A673 (cell line): ENCODE measurements at regions of chr11 and their contacts with region 1.

Region 1: DNA sequence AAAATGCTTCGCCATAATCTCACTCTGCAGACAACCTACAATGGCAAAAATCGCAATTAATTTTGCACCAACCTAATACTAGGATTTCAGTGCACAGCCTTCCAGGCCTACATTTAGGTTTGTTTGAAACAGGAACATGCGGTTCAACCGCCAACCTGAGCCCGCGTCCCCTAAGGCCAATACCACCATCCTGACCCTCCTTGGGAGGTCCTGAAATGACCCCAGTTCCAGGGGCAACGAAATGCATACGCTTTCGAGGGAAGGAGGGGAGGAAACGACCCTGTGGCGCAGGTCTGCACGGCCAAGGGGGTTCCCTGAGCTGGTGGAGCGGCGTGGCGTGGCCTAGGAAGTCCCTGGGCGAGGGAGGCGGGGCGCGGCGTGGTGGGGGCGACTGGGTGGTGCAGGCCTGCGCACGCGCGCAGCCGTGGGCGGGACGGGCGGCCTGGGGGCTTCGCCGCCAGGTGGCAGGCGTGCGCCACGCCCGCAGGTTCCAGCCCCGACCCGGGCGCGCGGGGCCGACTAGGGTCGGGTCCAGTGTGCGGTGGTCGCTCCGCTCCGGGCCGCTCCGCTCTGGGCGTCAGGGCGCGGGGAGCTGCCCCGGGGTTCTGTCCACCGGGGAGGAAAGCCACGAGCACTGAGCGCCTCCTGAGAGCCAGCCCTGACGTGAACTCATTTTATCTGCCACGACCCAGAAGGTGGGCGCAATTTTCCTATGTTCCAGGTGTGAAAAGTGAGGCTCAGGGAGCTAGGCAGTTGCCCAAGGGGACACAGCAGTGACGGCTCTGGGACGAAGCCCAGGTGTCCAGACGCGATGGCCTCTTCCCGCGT is 94.1 kb downstream of the SWAP70 start:
- DNase-seq: peak; percentile 85
- H3K4me3 ChIP-seq: peak overlapping the region; percentile 64
- H3K27ac ChIP-seq: peak overlapping the region; percentile 93
- H3K4me1 ChIP-seq: peaks cover 24% of the 10 kb centered on the region
- H3K27me3 ChIP-seq: no peaks in the 10 kb centered on the region
- CTCF ChIP-seq: peak; percentile 50; the same call in 1 of the 2 replicates

Region 2: DNA sequence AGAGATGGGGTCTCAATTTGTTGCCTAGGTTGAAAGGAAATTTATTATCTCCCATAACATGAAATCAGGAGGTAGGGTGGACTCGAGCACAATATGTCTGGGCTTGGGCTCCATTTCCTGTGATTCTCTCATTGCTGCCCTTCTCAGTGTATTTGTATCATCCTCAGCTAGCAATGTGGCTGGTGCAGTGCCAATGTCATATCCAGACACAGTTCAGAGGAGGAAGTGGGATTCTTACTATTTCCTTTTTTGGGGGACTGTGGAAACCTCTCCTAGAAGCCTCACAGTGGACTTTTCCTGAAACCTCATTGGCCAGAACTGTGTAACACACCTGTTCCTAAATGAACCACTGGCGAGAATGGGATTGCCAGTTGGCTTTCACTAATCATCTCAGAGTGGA is 115.1 kb before region 1 on chr11:
- CTCF ChIA-PET with region 1: interaction called, 12 read pairs
- POLR2A ChIA-PET with region 1: no interaction called
- intact Hi-C with region 1: no loop called
- DNase-seq: no peak
- H3K4me3 ChIP-seq: no peak overlapping the region
- H3K27ac ChIP-seq: no peak overlapping the region
- H3K4me1 ChIP-seq: no peaks in the 10 kb centered on the region
- H3K27me3 ChIP-seq: no peaks in the 10 kb centered on the region
- CTCF ChIP-seq: no peak

Region 3: DNA sequence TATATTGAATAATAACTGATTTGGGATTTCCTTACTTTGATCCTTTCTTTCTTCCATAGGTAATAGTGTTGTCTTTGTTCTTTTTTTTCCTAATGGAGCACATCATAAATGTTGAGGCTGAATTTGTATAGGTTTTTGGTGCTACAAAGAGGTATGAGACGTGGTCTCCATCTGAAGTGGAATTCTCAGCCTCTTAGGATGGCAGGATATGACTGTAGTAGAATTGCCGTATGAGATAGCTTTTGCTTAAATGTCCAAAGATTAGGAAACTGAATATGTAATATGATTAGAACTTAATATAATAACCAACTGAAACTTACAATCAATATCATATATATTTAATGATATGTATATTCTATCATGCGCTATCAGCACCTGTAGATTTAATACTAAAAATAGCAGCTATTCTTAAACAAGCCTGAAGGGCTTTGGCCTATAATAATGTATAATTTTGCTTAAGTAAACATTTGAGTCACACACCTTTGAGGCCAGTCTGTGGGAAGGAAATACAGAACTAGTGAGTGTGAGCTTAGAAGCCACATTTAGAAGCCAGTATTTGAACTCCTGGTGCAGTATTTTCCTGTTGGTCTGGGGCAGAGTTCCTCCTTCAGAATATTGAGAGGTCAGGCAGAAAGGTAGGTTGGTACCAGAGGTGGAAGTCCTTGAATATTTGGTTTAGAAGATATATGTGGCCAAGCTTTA is 31.6 kb before region 1 on chr11:
- CTCF ChIA-PET with region 1: no interaction called
- POLR2A ChIA-PET with region 1: no interaction called
- intact Hi-C with region 1: no loop called
- DNase-seq: no peak
- H3K4me3 ChIP-seq: no peak overlapping the region
- H3K27ac ChIP-seq: no peak overlapping the region
- H3K4me1 ChIP-seq: no peaks in the 10 kb centered on the region
- H3K27me3 ChIP-seq: no peaks in the 10 kb centered on the region
- CTCF ChIP-seq: no peak

Region 4: GRCh38 chr11:9861860-9862725 is 104.1 kb after region 1 on chr11:
- CTCF ChIA-PET with region 1: no interaction called
- POLR2A ChIA-PET with region 1: no interaction called
- intact Hi-C with region 1: loop called (anchors 5 kb)
- DNase-seq: peak; percentile 81
- H3K4me3 ChIP-seq: no peak overlapping the region
- H3K27ac ChIP-seq: peak overlapping the region; percentile 49
- H3K4me1 ChIP-seq: peaks cover 49% of the 10 kb centered on the region
- H3K27me3 ChIP-seq: no peaks in the 10 kb centered on the region
- CTCF ChIP-seq: peak; percentile 86

Region 5: GRCh38 chr11:9972989-9973388 is 215.0 kb after region 1 on chr11:
- CTCF ChIA-PET with region 1: interaction called, 3 read pairs
- POLR2A ChIA-PET with region 1: no interaction called
- intact Hi-C with region 1: loop called (anchors 2 kb)
- DNase-seq: peak; percentile 68
- H3K4me3 ChIP-seq: no peak overlapping the region
- H3K27ac ChIP-seq: no peak overlapping the region
- H3K4me1 ChIP-seq: peaks cover 12% of the 10 kb centered on the region
- H3K27me3 ChIP-seq: no peaks in the 10 kb centered on the region
- CTCF ChIP-seq: peak; percentile 78

Region 6: GRCh38 chr11:10322830-10323792 is 565.1 kb after region 1 on chr11:
- CTCF ChIA-PET with region 1: no interaction called
- POLR2A ChIA-PET with region 1: no interaction called
- intact Hi-C with region 1: loop called (anchors 2 kb)
- DNase-seq: peak; percentile 84
- H3K4me3 ChIP-seq: no peak overlapping the region
- H3K27ac ChIP-seq: no peak overlapping the region
- H3K4me1 ChIP-seq: peaks cover 12% of the 10 kb centered on the region
- H3K27me3 ChIP-seq: no peaks in the 10 kb centered on the region
- CTCF ChIP-seq: peak; percentile 60